ENCODE measurements at regions of chr2 and their contacts with region 1.

Region 1: DNA sequence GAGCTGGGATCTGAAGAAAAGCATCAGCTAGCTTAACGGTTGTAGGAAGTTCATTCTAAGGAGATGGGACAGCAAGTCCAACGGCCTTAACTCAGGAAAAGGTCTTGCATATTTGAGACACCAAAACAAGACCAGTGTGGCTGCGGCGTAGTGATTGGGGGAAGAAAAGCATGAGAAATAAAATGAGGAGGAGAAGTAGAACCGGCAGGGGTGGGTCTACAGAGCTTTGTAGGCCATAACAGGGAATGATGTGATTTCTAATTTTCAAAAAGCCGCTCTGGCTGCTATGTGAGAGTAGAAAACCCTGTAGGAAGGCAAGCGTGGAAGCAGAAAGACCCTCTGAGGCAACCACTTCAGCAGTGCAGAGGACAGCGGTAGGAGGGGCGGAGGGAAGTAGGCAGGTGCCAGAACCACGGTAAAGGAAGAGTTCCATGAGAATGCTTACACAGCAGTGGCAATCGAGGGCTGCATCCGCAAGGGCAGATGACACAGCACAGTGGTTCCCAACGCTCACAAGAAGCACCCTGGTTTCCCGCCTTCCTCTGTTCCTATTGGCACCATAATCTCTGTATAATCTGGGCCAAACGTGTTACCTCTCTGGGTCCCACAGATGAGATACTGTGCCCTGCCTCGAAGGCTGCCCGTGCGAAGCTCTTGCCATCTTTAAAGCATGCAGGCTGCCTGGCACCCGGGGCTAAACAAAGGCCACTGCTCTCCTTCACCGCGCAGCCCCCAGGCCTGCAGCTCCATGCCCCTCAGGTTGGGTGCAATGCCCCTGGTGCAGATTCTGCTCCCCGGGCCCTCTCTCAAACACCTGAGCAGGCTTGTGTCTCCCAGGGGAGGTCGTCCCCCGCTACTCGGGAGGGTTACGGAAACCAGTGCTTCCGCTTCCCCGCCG is 791 bp downstream of the ANKRD39 start:
- DNase-seq: peak in 1 of 2 experiments; percentile 43
- ATAC-seq: peak; percentile 16 to 27
- H3K4me3 ChIP-seq: peak overlapping the region; percentile 63
- H3K27ac ChIP-seq: peak overlapping the region; percentile 82 to 97
- H3K4me1 ChIP-seq: peaks cover 27% of the 10 kb centered on the region; the same call in 2 of the 3 replicates
- CTCF ChIP-seq: no peak
- EP300 ChIP-seq: no peak
- POLR2A ChIP-seq: no peak
- RAD21 ChIP-seq: no peak

Region 2: GRCh38 chr2:96625571-96626552 is 231.2 kb before region 1 on chr2:
- CTCF ChIA-PET with region 1: no interaction called
- POLR2A ChIA-PET with region 1: interaction called, 14 read pairs
- DNase-seq: no peak
- ATAC-seq: no peak
- H3K4me3 ChIP-seq: no peak overlapping the region
- H3K27ac ChIP-seq: no peak overlapping the region
- H3K4me1 ChIP-seq: peaks cover 17% of the 10 kb centered on the region
- CTCF ChIP-seq: no peak
- EP300 ChIP-seq: no peak
- POLR2A ChIP-seq: no peak
- RAD21 ChIP-seq: no peak

Region 3: DNA sequence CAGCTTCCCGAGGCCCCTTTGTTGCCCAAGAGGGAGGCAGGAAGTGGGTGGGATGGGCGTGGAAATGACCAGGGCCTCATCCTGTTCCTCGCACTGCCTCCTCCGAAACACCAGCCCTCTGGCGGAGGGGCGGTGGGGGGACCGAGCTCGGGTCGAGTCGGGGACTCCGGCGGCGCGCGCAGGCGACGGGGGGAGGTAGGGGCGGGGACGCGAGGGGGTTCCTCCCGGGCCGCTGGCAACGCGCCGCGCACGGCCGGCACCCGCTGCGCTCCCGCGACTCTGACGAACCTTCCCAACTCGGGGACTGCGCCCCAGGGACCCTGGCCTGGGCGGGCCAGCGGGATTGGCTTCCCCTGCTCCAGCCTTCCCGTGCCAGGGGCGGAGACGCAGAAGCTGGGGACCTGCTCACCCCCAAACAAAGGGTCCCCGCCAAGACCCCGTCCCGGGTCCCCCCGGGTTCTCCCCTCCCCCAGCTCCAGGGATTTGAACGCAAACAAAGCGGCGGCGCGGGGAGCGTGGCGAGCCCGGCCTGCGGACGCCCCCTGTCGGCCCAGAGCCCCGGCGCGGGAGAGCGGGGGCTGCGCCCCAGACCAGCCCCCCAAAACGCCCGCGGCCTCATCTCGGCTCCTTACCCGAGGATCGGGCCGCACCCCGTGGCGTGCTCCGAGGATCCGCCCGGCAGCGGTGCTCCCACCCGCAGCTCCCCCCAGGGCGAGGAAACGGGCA is 11.7 kb after region 1 on chr2:
- CTCF ChIA-PET with region 1: interaction called, 54 read pairs
- POLR2A ChIA-PET with region 1: interaction called, 30 read pairs
- DNase-seq: peak; percentile 87 to 89
- ATAC-seq: peak; percentile 81 to 90
- H3K4me3 ChIP-seq: peak overlapping the region; percentile 100
- H3K27ac ChIP-seq: peak overlapping the region; percentile 99 to 100
- H3K4me1 ChIP-seq: peaks cover 13% of the 10 kb centered on the region
- CTCF ChIP-seq: peak; percentile 77
- EP300 ChIP-seq: no peak
- POLR2A ChIP-seq: peak; percentile 77
- RAD21 ChIP-seq: peak in 1 of 2 experiments; percentile 51; a peak in 4 of 5 replicates

Region 4: DNA sequence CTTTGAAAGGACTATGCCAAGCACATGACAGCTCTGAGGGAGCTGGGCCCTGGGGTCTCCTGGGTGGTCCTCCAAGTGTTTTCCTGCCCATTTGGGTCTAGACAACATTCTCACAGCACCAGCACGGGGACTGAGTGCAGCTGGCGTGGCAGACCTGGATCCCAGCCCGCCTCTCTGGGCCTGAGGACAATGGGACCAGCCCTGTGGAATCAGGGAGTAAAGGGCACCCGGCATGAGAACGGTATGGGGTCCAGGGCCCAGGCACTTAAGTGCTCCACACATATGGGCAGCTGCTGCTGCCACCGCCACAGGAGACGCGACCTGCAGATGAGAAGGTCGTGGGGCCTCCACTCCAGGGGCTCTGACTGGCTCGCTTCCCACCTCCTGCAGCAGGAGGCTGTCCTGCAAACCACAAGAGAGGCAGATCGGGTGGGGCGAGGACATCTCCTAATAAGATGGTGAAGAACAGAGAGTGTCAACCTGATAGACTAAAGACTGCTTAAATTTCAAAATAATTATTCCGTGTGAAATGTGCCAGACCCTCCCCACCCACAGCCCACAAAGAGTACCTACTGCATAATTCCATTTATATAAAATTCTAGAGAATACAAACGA is 83.1 kb after region 1 on chr2:
- CTCF ChIA-PET with region 1: interaction called, 13 read pairs
- POLR2A ChIA-PET with region 1: no interaction called
- DNase-seq: no peak
- ATAC-seq: no peak
- H3K4me3 ChIP-seq: no peak overlapping the region
- H3K27ac ChIP-seq: no peak overlapping the region
- H3K4me1 ChIP-seq: no peaks in the 10 kb centered on the region
- CTCF ChIP-seq: no peak
- EP300 ChIP-seq: no peak
- POLR2A ChIP-seq: no peak
- RAD21 ChIP-seq: no peak

Region 5: GRCh38 chr2:96960153-96960961 is 103.3 kb after region 1 on chr2:
- CTCF ChIA-PET with region 1: interaction called, 46 read pairs
- POLR2A ChIA-PET with region 1: no interaction called
- DNase-seq: peak; percentile 80 to 82
- ATAC-seq: peak; percentile 97 to 100
- H3K4me3 ChIP-seq: no peak overlapping the region
- H3K27ac ChIP-seq: 0 out of 6 replicates have a peak overlapping the region, but pooled peaks of 1 of the 2 experiments have one; percentile 4
- H3K4me1 ChIP-seq: peaks cover 4% of the 10 kb centered on the region; the same call in 1 of the 3 replicates
- CTCF ChIP-seq: peak; percentile 81
- EP300 ChIP-seq: no peak
- POLR2A ChIP-seq: no peak
- RAD21 ChIP-seq: peak; percentile 86 to 90